ENCODE measurements at regions of chr6 and their contacts with region 1.

Region 1: DNA sequence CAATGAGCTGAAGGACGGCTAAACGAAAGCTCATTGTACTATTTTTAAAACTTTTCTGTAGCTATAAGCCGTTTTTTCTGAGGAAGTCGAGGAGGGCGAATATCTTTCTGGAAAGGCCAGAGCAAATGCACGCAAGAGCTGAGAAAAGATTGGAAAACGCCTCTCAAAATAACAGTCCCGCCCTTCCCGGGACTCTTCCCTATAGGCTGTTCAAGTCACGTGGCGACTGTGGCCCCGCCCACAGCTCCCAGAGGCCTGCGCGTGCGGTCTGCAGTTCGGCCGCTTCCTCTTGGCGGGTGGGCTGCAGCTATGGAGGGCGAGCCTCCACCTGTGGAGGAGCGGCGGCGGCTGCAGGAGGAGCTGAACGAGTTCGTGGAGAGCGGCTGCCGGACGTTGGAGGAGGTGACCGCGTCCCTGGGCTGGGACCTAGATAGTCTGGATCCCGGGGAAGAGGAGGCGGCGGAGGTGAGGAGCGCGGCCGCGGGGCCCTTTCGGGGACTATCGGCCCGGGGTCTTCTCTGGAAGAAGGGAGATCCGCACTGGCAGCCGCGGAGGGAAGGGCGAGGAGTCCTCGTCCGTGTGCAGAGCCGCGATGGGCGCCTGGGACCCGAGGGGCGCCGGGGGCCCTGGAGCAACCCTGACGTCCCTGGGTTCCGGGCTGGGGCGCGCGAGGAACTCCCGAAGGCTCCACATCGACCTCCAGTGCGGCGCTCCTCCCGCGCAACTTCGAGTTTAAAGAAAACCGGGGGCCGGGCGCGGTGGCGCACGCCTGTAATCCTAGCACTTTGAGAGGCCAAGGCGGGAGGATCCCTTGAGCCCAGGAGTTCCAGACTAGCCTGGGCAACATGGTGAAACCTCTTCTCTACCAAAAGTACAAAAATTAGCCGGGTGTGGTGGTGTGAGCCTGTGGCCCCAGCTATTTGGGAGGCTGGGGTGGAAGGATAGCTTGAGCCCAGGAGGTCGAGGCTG is at the start of gene SNRNP48:
- DNase-seq: peak; percentile 96
- H3K4me3 Mint-ChIP-seq: peak within 1 kb of the TSS; percentile 95
- H3K27ac Mint-ChIP-seq: peak within 1 kb of the TSS; percentile 91
- H3K4me1 Mint-ChIP-seq: peaks cover 39% of the 10 kb centered on the region
- H3K27me3 Mint-ChIP-seq: no peaks in the 10 kb centered on the region
- total RNA-seq, gene SNRNP48: 22.7 to 22.8 TPM

Region 2: GRCh38 chr6:7389451-7390225 is 200.6 kb before region 1 on chr6 and contains the starts of genes CAGE1 and RIOK1:
- CTCF ChIA-PET with region 1: interaction called, 4 read pairs
- intact Hi-C with region 1: loop called (anchors 1 kb)
- DNase-seq: peak; percentile 97
- H3K4me3 Mint-ChIP-seq: peak within 1 kb of the TSS; percentile 94
- H3K27ac Mint-ChIP-seq: peak within 1 kb of the TSS; percentile 97
- H3K4me1 Mint-ChIP-seq: peaks cover 40% of the 10 kb centered on the region
- H3K27me3 Mint-ChIP-seq: no peaks in the 10 kb centered on the region
- total RNA-seq, gene CAGE1: 0.25 to 0.26 TPM
- total RNA-seq, gene RIOK1: 33.8 to 38.5 TPM

Region 3: DNA sequence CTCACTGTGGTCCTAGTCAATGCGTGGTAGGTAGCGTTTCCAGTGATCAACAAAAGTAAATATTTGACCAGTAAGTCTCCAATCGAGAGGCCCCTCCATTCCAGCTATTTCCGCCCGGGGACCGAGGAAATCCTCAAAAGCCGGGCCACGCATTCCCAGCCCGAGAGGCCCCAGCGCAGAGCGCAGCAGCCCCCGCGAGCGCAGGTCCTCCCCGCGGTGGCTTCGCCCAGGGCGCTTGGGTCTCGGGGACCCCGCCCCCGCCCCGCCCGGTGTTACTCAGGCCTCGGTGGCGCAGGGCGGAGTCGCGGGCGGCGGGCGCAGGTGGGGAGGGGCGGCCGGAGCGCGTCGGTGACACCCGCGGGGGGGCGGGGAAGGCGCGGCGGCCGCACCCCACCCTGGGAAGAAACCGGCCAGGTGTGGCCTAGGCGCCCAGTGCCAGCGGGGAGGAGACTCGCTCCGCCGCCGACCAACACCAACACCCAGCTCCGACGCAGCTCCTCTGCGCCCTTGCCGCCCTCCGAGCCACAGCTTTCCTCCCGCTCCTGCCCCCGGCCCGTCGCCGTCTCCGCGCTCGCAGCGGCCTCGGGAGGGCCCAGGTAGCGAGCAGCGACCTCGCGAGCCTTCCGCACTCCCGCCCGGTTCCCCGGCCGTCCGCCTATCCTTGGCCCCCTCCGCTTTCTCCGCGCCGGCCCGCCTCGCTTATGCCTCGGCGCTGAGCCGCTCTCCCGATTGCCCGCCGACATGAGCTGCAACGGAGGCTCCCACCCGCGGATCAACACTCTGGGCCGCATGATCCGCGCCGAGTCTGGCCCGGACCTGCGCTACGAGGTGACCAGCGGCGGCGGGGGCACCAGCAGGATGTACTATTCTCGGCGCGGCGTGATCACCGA is 48.8 kb before region 1 on chr6 and contains the start of gene DSP:
- CTCF ChIA-PET with region 1: no interaction called
- intact Hi-C with region 1: loop called (anchors 2 kb)
- DNase-seq: peak; percentile 38
- H3K4me3 Mint-ChIP-seq: peak within 1 kb of the TSS; percentile 77
- H3K27ac Mint-ChIP-seq: no peak within 1 kb of the TSS
- H3K4me1 Mint-ChIP-seq: peaks cover 6% of the 10 kb centered on the region
- H3K27me3 Mint-ChIP-seq: peaks cover 65% of the 10 kb centered on the region
- total RNA-seq, gene DSP: 0.22 TPM in 1 of 2 experiments, not detected in the other

Region 4: DNA sequence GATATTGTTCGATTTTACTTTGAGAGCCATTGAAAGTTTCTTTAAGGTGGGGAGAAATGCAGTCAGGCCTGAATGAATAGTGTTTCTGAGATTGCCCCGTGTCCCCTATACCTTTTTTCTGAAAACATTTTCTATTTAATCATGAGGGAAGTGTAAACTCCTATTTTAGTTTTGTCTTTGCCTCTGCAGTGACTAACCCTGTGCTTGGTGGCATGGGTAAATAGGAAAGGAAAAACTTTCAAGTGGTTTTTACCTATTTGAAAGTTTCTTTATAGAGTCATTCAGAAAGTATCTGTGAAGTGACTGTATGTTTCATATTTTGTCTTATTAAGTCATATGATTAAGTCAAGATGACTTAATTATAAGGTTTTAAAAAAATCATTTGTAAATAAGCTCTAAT is 14.3 kb after region 1 on chr6:
- CTCF ChIA-PET with region 1: interaction called, 5 read pairs
- intact Hi-C with region 1: loop called (anchors 1 kb)
- DNase-seq: no peak
- H3K4me3 Mint-ChIP-seq: no peak overlapping the region
- H3K27ac Mint-ChIP-seq: no peak overlapping the region
- H3K4me1 Mint-ChIP-seq: peaks cover 19% of the 10 kb centered on the region
- H3K27me3 Mint-ChIP-seq: no peaks in the 10 kb centered on the region

Region 5: DNA sequence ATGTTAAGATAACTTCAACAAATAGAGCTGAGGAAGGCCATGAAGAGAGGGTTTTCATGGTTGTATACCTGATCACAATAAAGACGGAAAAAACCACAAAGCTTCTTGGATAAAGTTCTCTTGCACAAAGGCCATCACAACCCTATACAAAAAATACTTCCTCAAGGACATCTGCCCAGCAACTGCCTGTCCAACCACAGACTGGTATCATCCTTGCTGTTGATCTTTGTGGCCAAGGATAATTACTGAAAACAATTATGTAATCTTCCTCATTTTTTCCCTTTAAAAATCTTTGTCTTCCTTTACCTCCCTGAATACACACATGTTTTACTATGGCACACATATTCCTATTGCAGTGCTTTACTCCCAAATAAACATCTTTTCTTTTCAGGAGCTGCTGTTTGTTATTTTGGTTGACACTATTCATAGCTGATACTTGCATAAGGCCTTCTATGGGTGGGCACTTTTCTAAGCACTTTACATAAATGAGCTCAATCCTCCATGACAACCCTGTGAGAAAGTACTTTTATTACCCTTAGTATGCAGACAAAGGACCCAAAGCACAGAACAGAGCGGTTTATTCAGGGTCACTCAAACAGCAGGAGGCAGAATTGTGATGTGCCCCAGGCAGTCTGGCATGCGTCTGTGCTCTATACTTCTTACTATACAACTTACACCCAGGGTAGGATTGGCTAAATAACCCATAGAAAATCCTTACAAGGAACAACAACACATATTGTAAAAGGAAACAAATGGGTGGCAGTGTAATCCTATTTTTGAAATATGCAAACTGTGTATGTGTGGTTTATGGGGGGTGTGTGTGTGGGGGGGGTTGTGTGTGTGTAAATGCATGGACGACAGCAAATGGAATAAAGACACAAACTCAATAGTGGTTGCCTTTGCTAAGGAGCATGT is 34.8 kb after region 1 on chr6:
- CTCF ChIA-PET with region 1: no interaction called
- intact Hi-C with region 1: no loop called
- DNase-seq: no peak
- H3K4me3 Mint-ChIP-seq: no peak overlapping the region
- H3K27ac Mint-ChIP-seq: no peak overlapping the region
- H3K4me1 Mint-ChIP-seq: no peaks in the 10 kb centered on the region
- H3K27me3 Mint-ChIP-seq: peaks cover 5% of the 10 kb centered on the region

Region 6: GRCh38 chr6:8435160-8435852 is 845.1 kb after region 1 on chr6 and contains the start of gene SLC35B3:
- CTCF ChIA-PET with region 1: no interaction called
- intact Hi-C with region 1: loop called (anchors 2 kb)
- DNase-seq: peak; percentile 97
- H3K4me3 Mint-ChIP-seq: peak within 1 kb of the TSS; percentile 89
- H3K27ac Mint-ChIP-seq: peak within 1 kb of the TSS; percentile 94
- H3K4me1 Mint-ChIP-seq: peaks cover 32% of the 10 kb centered on the region
- H3K27me3 Mint-ChIP-seq: no peaks in the 10 kb centered on the region
- total RNA-seq, gene SLC35B3: 7.7 to 8.0 TPM